ENCODE measurements at regions of chr9 and their contacts with region 1.

Region 1: GRCh38 chr9:89597711-89598625 is 6.8 kb upstream of the GADD45G start:
- H3K4me3 ChIP-seq: no peak overlapping the region
- H3K27ac ChIP-seq: no peak overlapping the region
- H3K4me1 ChIP-seq: no peaks in the 10 kb centered on the region
- CTCF ChIP-seq: peak; percentile 63

Region 2: DNA sequence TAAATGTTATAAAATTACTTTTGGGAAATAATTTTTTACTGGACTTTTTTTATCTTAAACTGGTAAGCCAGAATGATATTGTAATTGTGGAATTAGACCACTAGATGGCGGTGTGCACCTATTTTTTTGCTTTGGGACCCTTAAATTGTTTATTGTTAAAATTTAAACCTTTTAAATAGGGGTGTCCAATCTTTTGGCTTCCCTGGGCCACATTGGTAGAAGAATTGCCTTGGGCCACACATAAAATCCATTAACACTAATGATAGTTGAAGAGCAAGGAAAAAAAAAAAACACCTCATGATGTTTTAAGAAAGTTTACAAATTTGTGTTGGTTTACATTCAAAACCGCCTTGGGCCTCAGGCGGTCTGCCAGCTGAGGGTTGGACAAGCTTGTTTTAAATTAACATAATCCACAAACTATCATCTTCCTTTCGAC is 21.5 kb before region 1 on chr9:
- CTCF ChIA-PET with region 1: interaction called, 71 read pairs
- POLR2A ChIA-PET with region 1: interaction called, 3 read pairs
- H3K4me3 ChIP-seq: no peak overlapping the region
- H3K27ac ChIP-seq: no peak overlapping the region
- H3K4me1 ChIP-seq: no peaks in the 10 kb centered on the region
- CTCF ChIP-seq: no peak

Region 3: DNA sequence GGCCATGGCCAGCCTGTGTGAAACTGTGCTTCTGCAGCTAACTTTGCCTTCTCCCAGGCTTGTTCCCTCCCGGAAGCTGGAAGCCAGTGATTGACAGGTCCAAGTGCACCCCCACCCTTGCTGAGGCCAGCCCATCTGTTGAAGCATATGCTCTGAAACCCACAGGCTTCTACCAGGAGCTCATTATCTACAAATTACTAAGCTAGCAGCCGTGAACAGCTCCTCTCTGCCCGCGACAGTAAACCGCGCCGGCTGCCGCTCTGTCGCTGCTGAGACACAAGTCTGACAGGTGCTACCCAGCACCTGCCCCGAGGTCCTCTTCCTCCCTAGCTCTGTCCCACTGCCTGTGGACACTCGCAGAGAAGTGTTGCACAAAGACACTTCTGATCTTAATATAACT is 497.7 kb after region 1 on chr9:
- CTCF ChIA-PET with region 1: interaction called, 234 read pairs
- POLR2A ChIA-PET with region 1: interaction called, 45 read pairs
- H3K4me3 ChIP-seq: no peak overlapping the region
- H3K27ac ChIP-seq: no peak overlapping the region
- H3K4me1 ChIP-seq: no peaks in the 10 kb centered on the region
- CTCF ChIP-seq: no peak

Region 4: GRCh38 chr9:90102292-90102901 is 504.4 kb after region 1 on chr9:
- CTCF ChIA-PET with region 1: interaction called, 234 read pairs
- POLR2A ChIA-PET with region 1: interaction called, 45 read pairs
- H3K4me3 ChIP-seq: no peak overlapping the region
- H3K27ac ChIP-seq: no peak overlapping the region
- H3K4me1 ChIP-seq: no peaks in the 10 kb centered on the region; the same call in 1 of the 2 replicates
- CTCF ChIP-seq: peak; percentile 22; the same call in 1 of the 2 replicates

Measured in HEK293 (cell line).